ENCODE measurements at regions of chr2 and their contacts with region 1.

Region 1: DNA sequence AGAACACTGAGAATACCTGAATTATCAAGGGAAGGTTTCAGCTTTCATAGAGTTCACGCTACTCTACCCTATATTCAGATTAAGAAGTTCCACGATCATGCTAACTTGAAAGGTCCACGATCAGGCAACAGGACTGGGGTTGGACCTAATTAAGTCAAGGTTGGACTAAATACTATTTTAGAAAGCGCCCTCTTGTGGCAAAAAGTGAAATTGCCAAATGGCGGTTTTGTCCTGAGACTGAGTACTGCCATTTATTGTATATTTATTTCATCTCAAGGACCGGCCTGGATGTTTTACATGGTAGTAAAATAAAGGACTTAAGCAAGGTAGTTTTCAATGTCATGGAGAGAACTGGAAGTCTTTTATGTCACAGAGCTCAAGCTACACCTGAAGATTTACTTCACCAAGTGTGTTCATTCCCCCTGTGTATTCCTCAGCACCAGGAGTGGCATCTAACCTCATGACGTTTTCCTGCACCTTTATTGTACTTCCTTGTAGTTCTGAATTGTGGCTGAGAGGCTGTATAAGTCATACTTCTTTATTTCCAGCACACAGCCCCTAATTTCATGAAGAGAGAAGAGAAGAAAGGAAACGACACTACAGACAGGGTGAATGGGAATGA is 56.8 kb downstream of the SRD5A2 start:
- DNase-seq: peak; percentile 10 to 59 (median 51)
- ATAC-seq: no peak
- H3K4me3 ChIP-seq: no peak overlapping the region
- H3K4me3 Mint-ChIP-seq: no peak overlapping the region
- H3K27ac ChIP-seq: no peak overlapping the region
- H3K27ac Mint-ChIP-seq: no peak overlapping the region
- H3K4me1 ChIP-seq: no peaks in the 10 kb centered on the region
- H3K4me1 Mint-ChIP-seq: no peaks in the 10 kb centered on the region
- H3K27me3 ChIP-seq: no peaks in the 10 kb centered on the region
- H3K27me3 Mint-ChIP-seq: peaks cover 13% of the 10 kb centered on the region
- CTCF ChIP-seq: peak; percentile 79

Region 2: GRCh38 chr2:30172627-30173026 is 1351.4 kb before region 1 on chr2:
- CTCF ChIA-PET with region 1: no interaction called
- POLR2A ChIA-PET with region 1: no interaction called
- intact Hi-C with region 1: loop called in 1 of 2 experiments (anchors 5 kb)
- DNase-seq: peak in 1 of 9 experiments; percentile 40
- ATAC-seq: peak; percentile 23
- H3K4me3 ChIP-seq: no peak overlapping the region
- H3K4me3 Mint-ChIP-seq: no peak overlapping the region
- H3K27ac ChIP-seq: no peak overlapping the region
- H3K27ac Mint-ChIP-seq: no peak overlapping the region
- H3K4me1 ChIP-seq: no peaks in the 10 kb centered on the region
- H3K4me1 Mint-ChIP-seq: no peaks in the 10 kb centered on the region
- H3K27me3 ChIP-seq: no peaks in the 10 kb centered on the region
- H3K27me3 Mint-ChIP-seq: no peaks in the 10 kb centered on the region
- CTCF ChIP-seq: no peak

Region 3: GRCh38 chr2:31434911-31435310 is 89.1 kb before region 1 on chr2:
- CTCF ChIA-PET with region 1: no interaction called
- POLR2A ChIA-PET with region 1: no interaction called
- intact Hi-C with region 1: no loop called
- DNase-seq: no peak
- ATAC-seq: no peak
- H3K4me3 ChIP-seq: no peak overlapping the region
- H3K4me3 Mint-ChIP-seq: no peak overlapping the region
- H3K27ac ChIP-seq: no peak overlapping the region
- H3K27ac Mint-ChIP-seq: no peak overlapping the region
- H3K4me1 ChIP-seq: peaks cover 6% of the 10 kb centered on the region
- H3K4me1 Mint-ChIP-seq: peaks cover 6% of the 10 kb centered on the region
- H3K27me3 ChIP-seq: no peaks in the 10 kb centered on the region
- H3K27me3 Mint-ChIP-seq: peaks cover 4% of the 10 kb centered on the region
- CTCF ChIP-seq: no peak

Region 4: GRCh38 chr2:31534636-31535035 is 10.7 kb after region 1 on chr2:
- CTCF ChIA-PET with region 1: interaction called, 17 read pairs
- POLR2A ChIA-PET with region 1: no interaction called
- intact Hi-C with region 1: no loop called
- DNase-seq: no peak
- ATAC-seq: no peak
- H3K4me3 ChIP-seq: no peak overlapping the region
- H3K4me3 Mint-ChIP-seq: no peak overlapping the region
- H3K27ac ChIP-seq: no peak overlapping the region
- H3K27ac Mint-ChIP-seq: no peak overlapping the region
- H3K4me1 ChIP-seq: no peaks in the 10 kb centered on the region
- H3K4me1 Mint-ChIP-seq: no peaks in the 10 kb centered on the region
- H3K27me3 ChIP-seq: no peaks in the 10 kb centered on the region
- H3K27me3 Mint-ChIP-seq: peaks cover 19% of the 10 kb centered on the region
- CTCF ChIP-seq: no peak

Region 5: GRCh38 chr2:32124660-32125059 is 600.7 kb after region 1 on chr2:
- CTCF ChIA-PET with region 1: no interaction called
- POLR2A ChIA-PET with region 1: no interaction called
- intact Hi-C with region 1: no loop called
- DNase-seq: no peak
- ATAC-seq: no peak
- H3K4me3 ChIP-seq: no peak overlapping the region
- H3K4me3 Mint-ChIP-seq: no peak overlapping the region
- H3K27ac ChIP-seq: no peak overlapping the region
- H3K27ac Mint-ChIP-seq: no peak overlapping the region
- H3K4me1 ChIP-seq: no peaks in the 10 kb centered on the region
- H3K4me1 Mint-ChIP-seq: no peaks in the 10 kb centered on the region
- H3K27me3 ChIP-seq: no peaks in the 10 kb centered on the region
- H3K27me3 Mint-ChIP-seq: no peaks in the 10 kb centered on the region
- CTCF ChIP-seq: no peak